Esophagus muscularis mucosa (tissue), 4 donors: ENCODE measurements at regions of chr9 and their contacts with region 1.

Region 1: DNA sequence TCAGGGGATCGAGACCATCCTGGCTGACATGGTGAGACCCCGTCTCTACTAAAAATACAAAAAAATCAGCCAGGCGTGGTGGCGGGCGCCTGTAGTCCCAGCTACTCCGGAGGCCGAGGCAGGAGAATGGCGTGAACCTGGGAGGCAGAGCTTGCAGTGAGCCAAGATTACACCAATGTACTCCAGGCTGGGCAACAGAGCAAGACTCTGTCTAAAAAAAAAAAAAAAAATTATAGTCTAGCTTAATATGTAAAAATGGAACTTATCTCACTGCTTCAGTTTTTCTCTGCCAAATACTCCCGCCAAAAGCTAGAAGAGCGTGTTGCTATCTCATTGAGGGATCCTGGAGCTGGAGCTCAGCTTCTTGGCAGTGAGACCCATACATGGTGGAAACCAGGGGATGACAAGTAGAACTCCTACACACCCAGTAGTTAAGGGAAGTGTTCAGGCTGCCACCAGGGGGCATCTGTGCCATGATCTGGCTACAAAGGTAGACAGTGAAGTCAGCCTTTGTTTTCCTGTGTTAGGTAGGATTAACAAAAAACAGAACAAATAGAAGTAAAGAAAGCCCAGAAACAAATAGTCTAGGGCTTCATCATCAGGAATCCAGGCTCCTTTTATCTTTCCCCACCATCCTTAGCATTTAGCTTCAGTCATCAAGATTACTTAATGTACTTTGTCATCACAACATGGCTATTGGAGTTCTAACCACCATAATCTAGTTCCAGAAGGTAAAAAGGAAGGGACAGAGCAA is 33.6 kb upstream of the GLIPR2 start:
- DNase-seq: no peak
- H3K4me3 ChIP-seq: no peak overlapping the region
- H3K27ac ChIP-seq: peak overlapping the region in 1 of 4 donors; percentile 27
- H3K4me1 ChIP-seq: peaks cover 0 to 8% (median 1%) of the 10 kb centered on the region in 4 donors
- H3K27me3 ChIP-seq: no peaks in the 10 kb centered on the region
- CTCF ChIP-seq: peak; percentile 83 to 89 (median 87)
- EP300 ChIP-seq: no peak
- POLR2A ChIP-seq: no peak

Region 2: DNA sequence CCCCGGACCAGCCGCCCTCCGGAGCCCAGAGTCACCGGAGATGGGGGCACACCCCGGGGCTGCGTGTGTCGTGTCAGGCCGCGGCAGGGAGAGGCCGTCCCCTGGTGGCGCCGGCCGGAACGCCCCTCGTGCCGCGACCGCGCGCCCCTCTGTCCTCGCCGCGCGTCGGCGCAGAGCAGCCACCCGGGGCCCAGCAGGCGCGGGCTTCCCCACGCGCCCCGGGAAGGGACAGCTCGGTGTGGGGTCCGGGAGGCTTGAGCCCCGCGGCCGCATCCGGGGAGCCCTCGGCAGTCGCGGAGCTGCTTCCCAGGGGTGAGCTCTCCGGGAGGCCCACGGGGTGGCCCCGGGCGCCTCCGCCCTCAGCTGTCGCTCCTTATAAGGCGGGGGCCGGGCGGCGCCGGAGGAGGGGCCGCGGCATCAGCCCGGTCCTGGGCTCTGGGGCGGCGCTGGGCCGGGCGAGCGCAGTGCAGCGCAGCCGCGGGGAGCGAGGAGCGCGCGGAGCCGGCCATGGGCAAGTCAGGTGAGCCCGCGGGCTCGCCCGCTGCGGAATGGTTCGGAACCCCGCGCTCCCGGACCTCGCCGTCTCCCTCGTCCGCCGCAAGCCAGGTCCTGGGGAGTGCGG is 33.5 kb after region 1 on chr9 and contains the start of gene GLIPR2:
- intact Hi-C with region 1: loop called (anchors 5 kb)
- DNase-seq: no peak
- H3K4me3 ChIP-seq: peak within 1 kb of the TSS; percentile 83 to 99 (median 86)
- H3K27ac ChIP-seq: peak within 1 kb of the TSS; percentile 90 to 94 (median 92)
- H3K4me1 ChIP-seq: peaks cover 23 to 60% (median 54%) of the 10 kb centered on the region in 4 donors
- H3K27me3 ChIP-seq: no peaks in the 10 kb centered on the region
- CTCF ChIP-seq: peak in 2 of 3 experiments; percentile 31 to 35
- EP300 ChIP-seq: no peak
- POLR2A ChIP-seq: peak; percentile 43
- total RNA-seq, gene GLIPR2: 51.3 to 84.9 (median 59.6) TPM

Region 3: GRCh38 chr9:36187414-36187813 is 84.5 kb after region 1 on chr9:
- intact Hi-C with region 1: no loop called
- DNase-seq: no peak
- H3K4me3 ChIP-seq: no peak overlapping the region
- H3K27ac ChIP-seq: no peak overlapping the region
- H3K4me1 ChIP-seq: peaks cover 14 to 18% (median 18%) of the 10 kb centered on the region in 4 donors
- H3K27me3 ChIP-seq: no peaks in the 10 kb centered on the region
- CTCF ChIP-seq: no peak
- EP300 ChIP-seq: no peak
- POLR2A ChIP-seq: no peak